ENCODE measurements at regions of chr1 and their contacts with region 1.

Region 1: DNA sequence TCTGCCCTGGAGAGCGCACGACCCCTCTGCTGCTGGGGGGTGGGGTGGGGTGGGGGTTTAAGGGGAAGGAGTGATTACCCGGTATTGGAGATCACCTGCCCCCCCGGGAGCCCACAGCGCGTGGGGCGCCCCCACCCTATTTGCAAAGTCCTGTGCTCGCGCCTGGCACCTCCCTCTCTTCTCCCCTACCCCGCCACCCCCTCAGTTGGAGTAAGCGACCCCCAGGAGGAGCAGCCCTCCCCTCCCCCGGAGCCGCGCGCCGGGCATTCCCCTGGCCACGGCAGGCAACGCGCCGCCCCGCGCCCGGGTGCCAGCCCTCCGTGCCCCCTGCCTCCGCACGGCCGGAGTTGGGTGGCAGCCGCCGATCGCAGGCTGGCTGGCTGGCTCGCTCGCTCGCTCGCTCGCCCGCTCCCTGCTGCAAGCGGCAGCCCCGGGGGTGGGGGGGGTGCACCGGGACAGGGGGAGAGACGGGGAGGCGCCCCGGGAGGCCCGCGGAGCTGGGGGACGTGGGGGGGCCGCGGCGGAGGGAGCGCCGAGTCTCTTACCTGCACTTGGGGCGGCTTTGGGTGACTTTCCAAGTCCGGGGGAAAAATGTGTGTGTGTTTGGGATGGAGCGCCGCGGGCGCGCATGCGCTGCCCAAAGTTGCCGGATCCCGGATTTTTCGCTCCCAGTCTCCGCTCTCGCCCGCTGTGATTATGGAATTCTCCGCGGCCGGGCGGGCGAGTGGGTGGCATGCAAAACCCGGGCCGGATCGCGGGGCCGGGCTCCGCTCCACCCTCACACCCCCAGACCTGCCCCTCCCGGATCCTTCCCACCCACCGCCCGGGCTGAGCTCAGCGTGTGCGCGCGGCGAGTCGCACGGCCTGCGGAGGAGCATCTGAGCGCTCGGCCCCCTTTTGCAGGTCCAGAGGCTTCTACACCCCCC is at the start of gene CASZ1:
- DNase-seq: peak; percentile 79 to 86
- ATAC-seq: peak; percentile 65 to 78 (median 72)
- H3K4me3 ChIP-seq: peak within 1 kb of the TSS; percentile 39 to 96 (median 79)
- H3K27ac ChIP-seq: peak within 1 kb of the TSS; percentile 71 to 99 (median 90)
- H3K4me1 ChIP-seq: peaks cover under 1 to 37% (median 24%) of the 10 kb centered on the region in 9 donors
- H3K27me3 ChIP-seq: peaks cover 0 to 90% (median 14%) of the 10 kb centered on the region in 7 donors
- CTCF ChIP-seq: no peak
- total RNA-seq, gene CASZ1: 54.4 to 79.8 (median 66.1) TPM

Region 2: DNA sequence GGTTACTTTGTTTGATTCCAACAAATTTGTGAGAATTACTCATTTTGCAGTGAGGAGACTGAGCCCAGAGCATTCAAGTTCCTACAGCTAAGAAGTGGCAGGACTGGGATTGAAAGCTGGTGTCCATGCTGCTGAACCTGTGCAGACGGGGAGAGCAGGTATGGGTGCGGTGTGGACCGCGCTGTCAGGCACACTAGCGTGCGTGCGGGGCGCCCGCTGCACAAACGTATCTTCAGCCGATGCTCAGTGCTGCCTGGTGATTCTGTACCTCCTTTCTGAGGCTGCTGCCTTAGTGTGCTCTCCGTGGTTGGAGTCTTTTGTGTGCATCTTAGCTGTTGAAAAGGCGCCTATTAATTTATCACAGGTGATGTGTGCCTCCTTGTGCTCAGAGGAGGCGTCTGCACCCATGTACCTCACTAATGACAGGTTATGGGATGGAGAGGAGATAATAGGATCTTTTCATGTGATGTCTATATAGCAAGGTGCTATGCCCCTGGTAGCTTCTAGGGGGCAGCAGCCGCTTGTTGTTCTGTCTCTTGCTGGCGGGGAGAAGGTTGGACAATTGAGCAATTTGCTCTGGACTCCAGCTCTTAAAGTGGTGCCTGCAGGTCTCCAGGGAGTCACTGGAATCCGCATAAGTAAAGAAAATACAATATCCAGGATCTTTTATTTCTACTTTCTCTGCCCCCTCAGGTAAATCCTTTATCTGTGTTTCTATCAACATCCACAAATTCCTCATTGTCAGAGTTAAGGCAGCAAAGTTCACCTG is 289.0 kb before region 1 on chr1:
- intact Hi-C with region 1: loop called in 1 of 10 experiments (anchors 10 kb)
- DNase-seq: peak; percentile 49 to 54
- ATAC-seq: peak; percentile 41 to 88 (median 84)
- H3K4me3 ChIP-seq: no peak overlapping the region
- H3K27ac ChIP-seq: no peak overlapping the region
- H3K4me1 ChIP-seq: peaks cover 0 to 41% (median 26%) of the 10 kb centered on the region in 9 donors
- H3K27me3 ChIP-seq: no peaks in the 10 kb centered on the region
- CTCF ChIP-seq: peak; percentile 65 to 88 (median 82)

Region 3: GRCh38 chr1:10530281-10530740 is 266.0 kb before region 1 on chr1:
- intact Hi-C with region 1: loop called in 2 of 10 experiments (anchors 10 kb)
- DNase-seq: peak in 1 of 2 donors; percentile 40
- ATAC-seq: peak; percentile 43 to 68 (median 54)
- H3K4me3 ChIP-seq: peak overlapping the region in 1 of 10 donors; percentile 4
- H3K27ac ChIP-seq: peak overlapping the region in 2 of 10 donors; percentile 3 to 77
- H3K4me1 ChIP-seq: peaks cover 18 to 54% (median 33%) of the 10 kb centered on the region in 9 donors
- H3K27me3 ChIP-seq: no peaks in the 10 kb centered on the region
- CTCF ChIP-seq: peak; percentile 52 to 81 (median 67)

Region 4: DNA sequence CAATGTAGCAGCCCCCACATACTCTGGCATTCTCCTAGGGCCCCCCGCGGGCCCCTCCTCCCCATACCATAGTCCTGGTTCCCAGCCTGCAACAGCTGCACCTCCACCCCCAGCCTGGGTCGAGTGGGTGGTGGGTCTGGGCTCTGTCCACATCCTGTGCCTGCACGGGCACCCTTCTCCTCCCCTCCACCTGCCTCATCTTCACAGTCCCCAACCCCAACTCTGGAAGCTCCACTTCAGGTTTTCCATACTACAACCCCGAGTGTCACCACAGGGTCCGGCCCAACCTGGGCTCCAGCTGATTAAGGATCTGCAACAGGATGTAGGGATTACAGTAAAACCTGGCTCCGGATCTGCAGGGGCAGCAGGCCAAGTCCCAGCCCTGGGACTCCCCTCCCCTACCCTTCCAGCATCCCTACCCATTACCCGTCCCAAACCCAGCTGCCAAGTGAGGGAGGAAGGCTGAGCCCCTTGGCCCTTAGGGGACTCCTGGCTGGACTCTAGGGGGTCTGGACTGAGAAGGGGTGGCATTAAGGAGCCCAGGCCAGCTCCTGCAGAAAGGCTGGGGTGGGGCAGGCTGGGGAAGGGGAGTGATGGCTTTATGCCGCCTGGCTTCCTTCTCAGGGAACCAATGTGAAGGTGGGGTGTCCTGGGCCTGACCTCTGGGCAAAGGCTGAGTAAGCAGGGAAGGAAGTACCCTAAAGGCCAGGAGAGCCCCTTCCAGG is 116.6 kb before region 1 on chr1:
- intact Hi-C with region 1: loop called in 2 of 10 experiments (anchors 5 kb)
- DNase-seq: peak in 1 of 2 donors; percentile 61
- ATAC-seq: peak in 6 of 8 donors; percentile 0 to 40 (median 22)
- H3K4me3 ChIP-seq: no peak overlapping the region
- H3K27ac ChIP-seq: peak overlapping the region in 7 of 10 donors; percentile 38 to 92 (median 52)
- H3K4me1 ChIP-seq: peaks cover 30 to 100% (median 90%) of the 10 kb centered on the region in 9 donors
- H3K27me3 ChIP-seq: no peaks in the 10 kb centered on the region
- CTCF ChIP-seq: no peak

Region 5: DNA sequence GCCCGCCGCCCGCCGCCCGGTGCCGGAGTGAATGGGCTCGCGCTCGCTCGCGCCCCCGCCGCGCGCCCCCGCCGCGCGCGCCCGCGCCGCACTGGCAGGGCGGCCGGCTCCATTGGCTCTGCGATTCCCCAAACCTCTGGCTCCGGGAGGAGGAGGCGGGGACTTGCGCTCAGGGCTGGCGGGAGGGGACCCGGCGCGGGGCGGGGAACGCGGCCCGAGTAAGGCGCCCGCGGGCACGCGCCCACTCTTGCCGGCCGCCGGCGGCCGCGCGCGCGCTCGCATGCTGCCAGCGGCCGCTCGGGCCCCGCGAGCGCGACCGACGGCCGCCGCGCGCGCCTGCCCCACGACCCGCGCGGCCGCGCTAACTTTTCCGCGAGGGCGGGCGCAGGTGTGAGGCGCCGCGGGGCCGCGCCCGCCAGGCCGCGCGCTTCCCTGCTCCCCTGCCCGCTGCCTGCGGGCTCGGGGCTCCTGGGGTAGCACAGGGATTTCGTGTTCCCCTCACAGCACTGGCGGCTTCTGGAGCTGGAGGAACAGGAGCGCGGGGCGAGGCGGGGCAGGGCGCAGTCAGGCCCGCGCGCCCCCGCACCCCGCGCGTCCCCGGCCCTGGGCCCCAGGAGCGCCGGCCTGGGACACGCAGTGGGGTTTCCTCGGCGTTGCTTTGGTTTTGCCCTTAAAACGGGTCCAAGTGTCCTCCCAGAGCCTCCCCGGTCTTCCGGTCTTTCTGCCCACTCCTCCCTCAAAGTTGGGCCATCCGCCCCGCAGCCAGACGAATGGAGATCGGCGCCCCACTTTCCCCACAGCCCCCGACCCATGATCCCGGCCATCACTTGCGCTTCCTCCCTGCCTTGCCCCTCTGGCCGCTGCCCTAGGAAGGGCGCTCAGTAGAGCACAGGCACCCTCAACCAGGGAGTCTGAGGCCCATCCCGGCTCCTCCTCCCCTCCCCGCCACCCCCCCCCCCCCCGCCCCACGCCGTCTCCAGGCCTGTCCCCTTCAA is 101.4 kb before region 1 on chr1:
- intact Hi-C with region 1: loop called in 4 of 10 experiments (anchors 5 to 10 kb)
- DNase-seq: peak; percentile 90 to 91
- ATAC-seq: peak; percentile 23 to 92 (median 77)
- H3K4me3 ChIP-seq: peak overlapping the region; percentile 21 to 62 (median 56)
- H3K27ac ChIP-seq: peak overlapping the region; percentile 75 to 92 (median 88)
- H3K4me1 ChIP-seq: peaks cover 16 to 66% (median 46%) of the 10 kb centered on the region in 9 donors
- H3K27me3 ChIP-seq: peaks cover 0 to 3% (median 0%) of the 10 kb centered on the region in 7 donors
- CTCF ChIP-seq: no peak

Region 6: DNA sequence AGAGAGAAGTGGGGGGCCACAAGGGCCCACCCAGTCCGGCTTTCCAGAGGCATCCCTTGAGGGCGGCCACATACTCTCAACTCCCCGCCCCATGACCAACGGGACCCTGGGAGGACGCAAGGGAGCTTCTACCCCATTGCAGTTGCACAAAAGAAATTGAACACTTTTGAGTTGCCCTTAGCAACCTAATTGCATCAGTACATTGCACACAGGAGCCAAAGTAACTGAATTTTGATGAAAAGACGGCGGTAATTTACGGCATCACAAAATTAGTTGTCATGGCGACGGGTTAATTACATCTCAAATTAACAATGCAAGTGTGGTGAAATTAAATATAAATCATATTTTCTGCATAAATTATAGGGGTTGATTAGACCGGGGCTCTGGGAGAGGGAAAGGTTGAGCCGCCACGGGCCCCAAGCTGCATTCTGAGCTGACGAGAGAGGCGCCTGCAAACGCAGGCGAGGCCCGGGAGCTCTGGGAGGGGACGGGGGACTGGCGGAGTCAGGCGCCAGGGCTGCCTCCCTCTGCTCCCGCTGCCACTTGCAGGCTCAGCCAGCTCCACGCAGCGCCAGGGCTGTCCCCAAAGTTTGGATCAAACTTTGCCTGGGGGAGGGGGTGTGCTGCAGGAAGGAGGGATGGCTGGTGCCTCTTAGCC is 61.2 kb before region 1 on chr1:
- intact Hi-C with region 1: loop called in 1 of 10 experiments (anchors 5 kb)
- DNase-seq: peak in 1 of 2 donors; percentile 63
- ATAC-seq: peak; percentile 47 to 76 (median 67)
- H3K4me3 ChIP-seq: no peak overlapping the region
- H3K27ac ChIP-seq: peak overlapping the region in 7 of 10 donors; percentile 13 to 81 (median 62)
- H3K4me1 ChIP-seq: peaks cover 16 to 90% (median 56%) of the 10 kb centered on the region in 9 donors
- H3K27me3 ChIP-seq: no peaks in the 10 kb centered on the region
- CTCF ChIP-seq: no peak

Region 7: DNA sequence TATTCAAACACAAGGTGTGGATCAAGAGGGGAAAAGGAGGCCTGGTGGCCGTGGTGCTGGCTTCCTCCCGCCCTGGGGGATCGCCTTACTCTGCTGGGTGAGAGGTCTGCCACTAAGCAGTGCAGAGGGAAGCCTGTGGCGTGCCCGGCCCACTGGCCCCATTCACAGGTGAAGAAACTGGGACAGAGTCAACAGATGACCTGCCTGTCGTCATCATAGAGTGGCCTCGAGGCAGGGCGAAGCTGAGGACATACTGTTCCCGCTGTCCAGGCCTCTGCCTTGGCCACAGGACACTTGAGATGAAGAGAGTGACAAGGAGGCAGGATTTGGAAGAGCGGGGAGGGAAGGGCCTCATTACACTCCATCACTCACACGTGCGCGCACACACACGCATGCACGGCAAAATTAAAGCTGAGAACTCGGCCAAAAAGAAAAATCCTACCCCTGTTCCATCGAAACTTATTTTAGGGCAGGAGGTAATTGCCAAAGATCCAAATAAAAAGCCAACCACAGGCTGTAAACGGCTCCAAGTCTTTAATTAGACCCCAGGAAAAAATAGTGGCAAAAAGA is 50.3 kb before region 1 on chr1:
- intact Hi-C with region 1: no loop called
- DNase-seq: no peak
- ATAC-seq: peak; percentile 25 to 87 (median 65)
- H3K4me3 ChIP-seq: no peak overlapping the region
- H3K27ac ChIP-seq: peak overlapping the region in 7 of 10 donors; percentile 39 to 72 (median 57)
- H3K4me1 ChIP-seq: peaks cover 0 to 64% (median 27%) of the 10 kb centered on the region in 9 donors
- H3K27me3 ChIP-seq: peaks cover 0 to 4% (median 0%) of the 10 kb centered on the region in 7 donors
- CTCF ChIP-seq: no peak

Region 8: DNA sequence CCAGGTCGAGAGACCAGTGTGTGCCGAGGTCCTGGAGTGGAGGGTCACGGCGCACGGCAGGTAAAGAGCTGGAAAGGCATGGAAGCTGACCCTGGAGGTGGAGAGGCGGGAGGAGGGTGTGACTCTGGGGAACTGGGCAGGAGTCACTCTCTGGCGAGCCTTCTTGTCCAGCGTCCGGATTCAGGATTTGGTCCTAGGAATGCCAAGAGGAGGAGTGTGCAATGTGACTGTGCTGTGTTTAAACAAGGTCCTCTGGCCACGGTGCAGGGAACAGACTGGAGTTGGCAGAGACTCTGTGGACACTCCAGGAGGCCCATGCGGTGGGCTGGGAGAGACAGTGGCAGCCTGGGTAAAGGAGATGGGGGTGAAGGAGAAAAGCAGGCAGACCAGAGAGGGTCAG is 64.4 kb after region 1 on chr1:
- intact Hi-C with region 1: loop called in 6 of 10 experiments (anchors 2 to 10 kb)
- DNase-seq: no peak
- ATAC-seq: peak; percentile 25 to 75 (median 47)
- H3K4me3 ChIP-seq: no peak overlapping the region
- H3K27ac ChIP-seq: peak overlapping the region in 9 of 10 donors; percentile 30 to 84 (median 71)
- H3K4me1 ChIP-seq: peaks cover 0 to 62% (median 30%) of the 10 kb centered on the region in 9 donors
- H3K27me3 ChIP-seq: peaks cover 0 to 36% (median 12%) of the 10 kb centered on the region in 7 donors
- CTCF ChIP-seq: no peak

Region 9: DNA sequence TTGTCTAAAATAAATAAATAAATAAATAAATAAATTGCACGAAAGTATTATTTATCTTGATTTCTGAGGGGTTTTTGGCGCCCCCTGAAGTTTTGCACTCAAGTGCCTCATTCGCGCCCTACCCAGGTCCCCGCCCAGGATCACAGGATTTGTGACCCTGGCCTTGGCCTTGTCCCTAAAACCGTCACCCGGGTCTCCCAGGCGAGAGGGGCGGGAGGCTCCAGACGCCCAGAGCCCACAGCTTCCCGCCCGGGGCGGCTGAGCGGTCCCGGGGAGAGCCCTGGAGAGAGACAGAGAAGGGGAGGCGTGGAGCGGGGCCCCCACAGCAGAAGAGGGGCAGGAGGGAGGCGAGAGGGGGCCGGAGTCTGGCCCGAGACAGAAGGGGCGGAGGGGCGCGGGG is 92.0 kb after region 1 on chr1:
- intact Hi-C with region 1: no loop called
- DNase-seq: no peak
- ATAC-seq: no peak
- H3K4me3 ChIP-seq: no peak overlapping the region
- H3K27ac ChIP-seq: no peak overlapping the region
- H3K4me1 ChIP-seq: peaks cover 0 to 3% (median 0%) of the 10 kb centered on the region in 9 donors
- H3K27me3 ChIP-seq: peaks cover 0 to 87% (median 74%) of the 10 kb centered on the region in 7 donors
- CTCF ChIP-seq: no peak

Region 10: DNA sequence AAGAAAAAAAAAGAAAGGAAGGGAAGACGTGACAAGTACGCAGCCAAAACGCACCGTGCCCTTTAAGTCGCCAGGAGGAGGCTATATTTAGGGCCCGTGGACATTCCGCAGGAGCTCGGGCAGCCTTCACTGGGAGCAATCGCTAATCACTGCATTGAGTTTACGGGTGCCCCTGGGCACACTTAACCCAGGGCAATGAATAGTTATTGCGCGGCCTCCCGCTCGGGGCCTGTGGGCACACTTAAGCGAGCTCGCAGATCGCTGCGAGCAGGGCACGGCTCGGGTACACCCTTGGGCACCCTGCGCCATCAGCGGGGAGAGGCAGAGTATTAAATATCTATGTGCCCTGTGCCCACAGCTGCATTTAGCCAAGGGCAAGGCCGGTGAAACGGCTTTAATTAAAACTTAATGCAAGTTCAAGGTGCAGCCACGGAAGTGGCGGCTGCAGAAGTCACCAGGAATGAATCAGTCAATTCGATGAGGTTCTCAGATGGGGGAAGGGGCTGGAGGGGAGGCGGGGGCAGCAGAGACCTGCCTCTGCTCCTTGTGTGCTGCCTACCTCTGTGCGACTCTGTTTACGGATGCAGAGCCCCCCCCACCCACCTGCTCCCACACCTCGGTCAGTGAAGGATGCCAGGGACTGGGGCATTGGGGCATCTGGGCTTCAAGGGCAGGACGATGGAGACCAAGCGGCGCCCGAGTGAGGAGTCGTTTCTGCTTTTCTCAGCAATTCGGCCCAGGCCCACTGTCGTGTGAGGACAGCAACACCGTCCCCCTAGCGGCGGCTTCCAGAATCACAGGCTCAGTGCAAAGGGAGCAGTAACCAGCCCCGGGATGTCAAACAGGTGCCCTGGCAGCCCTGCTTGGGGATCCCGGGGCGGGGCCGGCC is 164.4 kb after region 1 on chr1:
- intact Hi-C with region 1: no loop called
- DNase-seq: peak; percentile 83 to 86
- ATAC-seq: peak; percentile 76 to 89 (median 80)
- H3K4me3 ChIP-seq: peak overlapping the region in 5 of 10 donors; percentile 4 to 22 (median 7)
- H3K27ac ChIP-seq: peak overlapping the region in 8 of 10 donors; percentile 5 to 71 (median 54)
- H3K4me1 ChIP-seq: peaks cover 0 to 22% (median 8%) of the 10 kb centered on the region in 9 donors
- H3K27me3 ChIP-seq: peaks cover 0 to 26% (median 9%) of the 10 kb centered on the region in 7 donors
- CTCF ChIP-seq: peak; percentile 66 to 88 (median 84)

Measured in heart right ventricle (tissue), 16 donors.